Adrenal gland (tissue), 19 donors: ENCODE measurements at regions of chr4 and their contacts with region 1.

Region 1: GRCh38 chr4:139030614-139031235 is 15.1 kb downstream of the NOCT start:
- DNase-seq: peak; percentile 70 to 95 (median 82)
- H3K4me3 ChIP-seq: no peak overlapping the region
- H3K27ac ChIP-seq: no peak overlapping the region
- H3K4me1 ChIP-seq: peaks cover 0 to 19% of the 10 kb centered on the region in 2 donors
- H3K27me3 ChIP-seq: no peaks in the 10 kb centered on the region
- CTCF ChIP-seq: peak; percentile 75 to 91 (median 89)
- POLR2A ChIP-seq: no peak

Region 2: DNA sequence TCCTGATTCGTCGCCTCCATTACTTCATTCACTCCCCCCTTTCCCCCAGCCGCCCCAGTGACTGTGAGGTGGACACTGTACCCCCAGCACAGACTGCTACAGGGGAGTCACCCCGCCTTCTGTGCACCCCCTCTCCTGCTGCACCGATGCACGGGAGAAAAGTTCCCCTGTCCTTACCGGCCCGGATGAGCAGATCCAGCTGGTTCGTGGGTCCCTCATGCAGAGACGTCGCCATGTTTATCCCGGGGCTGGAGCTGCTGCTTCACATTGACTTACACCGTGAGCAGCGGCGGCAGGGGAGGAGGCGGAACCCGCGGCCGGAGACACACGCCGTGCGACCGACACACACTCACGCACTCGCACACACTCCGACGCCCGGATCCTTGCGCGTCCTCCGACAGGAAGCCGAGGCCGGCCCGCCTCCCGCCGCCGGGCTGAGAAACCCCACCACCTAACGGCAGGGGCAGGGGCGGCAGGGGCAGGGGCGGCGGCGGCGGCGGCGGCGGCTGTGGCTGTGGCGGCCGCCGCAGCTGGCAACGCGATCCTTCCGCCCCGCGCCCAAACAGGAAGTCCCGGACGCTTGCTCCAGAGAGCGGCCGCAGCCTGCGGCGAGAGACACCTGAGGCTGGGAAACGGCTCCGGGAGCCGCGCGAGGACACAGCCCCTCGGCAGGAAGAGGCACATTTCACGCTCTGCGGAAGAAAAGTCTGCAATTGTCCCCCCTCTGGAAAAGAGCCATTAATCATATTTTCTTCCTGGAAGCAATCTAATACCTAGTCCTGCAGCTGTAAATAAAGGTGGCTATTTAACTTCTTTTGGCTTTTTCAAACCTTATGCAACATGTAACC is 53.5 kb after region 1 on chr4:
- intact Hi-C with region 1: loop called (anchors 10 kb)
- DNase-seq: peak; percentile 86 to 96 (median 92)
- H3K4me3 ChIP-seq: peak overlapping the region; percentile 3 to 88 (median 80)
- H3K27ac ChIP-seq: peak overlapping the region; percentile 89 to 96 (median 92)
- H3K4me1 ChIP-seq: peaks cover 4 to 36% of the 10 kb centered on the region in 2 donors
- H3K27me3 ChIP-seq: no peaks in the 10 kb centered on the region
- CTCF ChIP-seq: peak in 3 of 6 experiments; percentile 20 to 42 (median 40)
- POLR2A ChIP-seq: peak; percentile 49 to 86

Region 3: GRCh38 chr4:139167774-139168444 is 137.2 kb after region 1 on chr4:
- intact Hi-C with region 1: loop called (anchors 10 kb)
- DNase-seq: peak in 2 of 7 donors; percentile 26 to 33
- H3K4me3 ChIP-seq: no peak overlapping the region
- H3K27ac ChIP-seq: no peak overlapping the region
- H3K4me1 ChIP-seq: peaks cover 5 to 44% of the 10 kb centered on the region in 2 donors
- H3K27me3 ChIP-seq: no peaks in the 10 kb centered on the region
- CTCF ChIP-seq: peak; percentile 28 to 75 (median 58)
- POLR2A ChIP-seq: no peak

Region 4: GRCh38 chr4:139177868-139178611 is 147.3 kb after region 1 on chr4:
- intact Hi-C with region 1: loop called in 1 of 2 experiments (anchors 10 kb)
- DNase-seq: peak; percentile 96 to 97 (median 96)
- H3K4me3 ChIP-seq: peak overlapping the region; percentile 66 to 94 (median 94)
- H3K27ac ChIP-seq: peak overlapping the region; percentile 93 to 100 (median 99)
- H3K4me1 ChIP-seq: peaks cover 7 to 21% of the 10 kb centered on the region in 2 donors
- H3K27me3 ChIP-seq: no peaks in the 10 kb centered on the region
- CTCF ChIP-seq: peak in 2 of 6 experiments; percentile 18 to 24
- POLR2A ChIP-seq: peak; percentile 93 to 98

Region 5: GRCh38 chr4:139337612-139338011 is 306.9 kb after region 1 on chr4:
- intact Hi-C with region 1: no loop called
- DNase-seq: no peak
- H3K4me3 ChIP-seq: no peak overlapping the region
- H3K27ac ChIP-seq: no peak overlapping the region
- H3K4me1 ChIP-seq: peaks cover 7 to 25% of the 10 kb centered on the region in 2 donors
- H3K27me3 ChIP-seq: no peaks in the 10 kb centered on the region
- CTCF ChIP-seq: no peak
- POLR2A ChIP-seq: no peak